K562 (cell line): ENCODE measurements at regions of chr3 and their contacts with region 1.

Region 1: GRCh38 chr3:94062431-94063404 is at the starts of genes DHFR2 and NSUN3:
- DNase-seq: peak; percentile 66 to 94 (median 71)
- ATAC-seq: peak; percentile 95
- H3K4me3 ChIP-seq: peak within 1 kb of the TSS; percentile 70
- H3K27ac ChIP-seq: peak within 1 kb of the TSS; percentile 95
- H3K4me1 ChIP-seq: peaks cover 5% of the 10 kb centered on the region in 2 experiments; a peak in 2 of 5 replicates
- H3K27me3 ChIP-seq: no peaks in the 10 kb centered on the region
- CTCF ChIP-seq: no peak
- EP300 ChIP-seq: peak; percentile 16; the same call in 1 of the 2 replicates
- POLR2A ChIP-seq: peak; percentile 85
- RAD21 ChIP-seq: no peak
- polyA plus RNA-seq, gene DHFR2: 0.68 to 0.83 TPM
- polyA plus RNA-seq, gene NSUN3: 6.9 to 8.1 TPM

Region 2: GRCh38 chr3:93867425-93867824 is 195.3 kb before region 1 on chr3:
- CTCF ChIA-PET with region 1: no interaction called
- POLR2A ChIA-PET with region 1: no interaction called
- in situ Hi-C with region 1: no loop called
- intact Hi-C with region 1: loop called (anchors 10 kb)
- DNase-seq: peak; percentile 3 to 16 (median 6)
- ATAC-seq: peak; percentile 52; the same call in 1 of the 3 replicates
- H3K4me3 ChIP-seq: no peak overlapping the region
- H3K27ac ChIP-seq: no peak overlapping the region
- H3K4me1 ChIP-seq: no peaks in the 10 kb centered on the region
- H3K27me3 ChIP-seq: no peaks in the 10 kb centered on the region
- CTCF ChIP-seq: peak; percentile 22 to 38 (median 34); a peak in 5 of 6 replicates
- EP300 ChIP-seq: no peak
- POLR2A ChIP-seq: no peak
- RAD21 ChIP-seq: 0 out of 4 replicates have a peak, but pooled peaks of 1 of the 2 experiments have one; percentile 23

Region 3: DNA sequence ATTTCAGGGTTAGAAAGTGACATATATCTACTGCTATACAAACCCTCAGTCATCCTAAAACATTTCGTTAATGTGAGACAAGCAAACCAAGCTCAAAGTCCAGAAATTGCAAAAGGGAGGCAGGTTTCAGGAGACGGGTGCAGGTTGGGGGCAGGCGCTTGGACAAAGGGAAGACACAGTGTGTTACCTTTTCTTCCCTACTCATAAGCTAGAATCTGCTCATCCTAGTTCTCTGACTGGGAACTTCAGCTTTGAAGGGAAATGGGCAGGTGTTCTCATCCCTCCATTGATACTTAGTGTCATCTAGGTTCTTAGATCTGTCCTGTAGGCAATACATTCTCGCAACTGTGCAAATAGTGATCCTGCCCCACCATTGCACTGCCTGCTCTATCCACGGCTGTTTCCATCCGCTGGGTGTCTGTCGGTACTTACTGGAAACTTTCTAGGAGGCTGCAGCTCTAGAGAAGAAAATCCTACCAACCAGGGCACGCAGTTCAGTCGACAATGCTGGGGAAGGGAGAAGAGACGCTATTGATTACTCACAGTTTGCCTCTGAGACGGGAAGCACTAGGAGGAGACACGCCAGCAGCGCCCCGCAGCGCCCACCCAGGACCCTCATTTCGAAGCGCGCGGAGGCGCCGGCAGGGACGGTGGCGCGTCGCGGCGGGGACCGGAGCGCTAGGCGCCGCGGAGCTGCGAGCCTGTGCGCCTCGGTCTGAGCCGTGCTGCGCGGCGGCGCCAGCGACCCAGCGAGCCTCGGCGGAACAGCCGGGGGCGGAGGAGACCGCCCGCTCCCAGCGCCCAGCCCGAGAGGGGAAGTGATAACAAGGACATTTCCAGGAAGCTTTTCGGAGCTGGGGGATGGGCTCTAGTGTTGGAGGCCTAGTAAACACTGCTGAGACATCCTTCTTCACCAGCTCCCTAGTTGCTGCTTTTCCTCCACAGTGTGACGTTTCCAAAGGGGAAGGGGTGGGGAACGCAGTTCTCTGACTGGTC is 89.3 kb before region 1 on chr3 and contains the start of gene PROS1:
- CTCF ChIA-PET with region 1: no interaction called
- POLR2A ChIA-PET with region 1: interaction called, 6 read pairs
- in situ Hi-C with region 1: no loop called
- intact Hi-C with region 1: loop called (anchors 2 kb)
- DNase-seq: peak; percentile 60 to 93 (median 70)
- ATAC-seq: peak; percentile 93
- H3K4me3 ChIP-seq: peak within 1 kb of the TSS; percentile 79
- H3K27ac ChIP-seq: peak within 1 kb of the TSS; percentile 92
- H3K4me1 ChIP-seq: peaks cover 11 to 19% of the 10 kb centered on the region in 2 experiments; a peak in 4 of 5 replicates
- H3K27me3 ChIP-seq: no peaks in the 10 kb centered on the region
- CTCF ChIP-seq: no peak
- EP300 ChIP-seq: peak; percentile 66; the same call in 1 of the 2 replicates
- POLR2A ChIP-seq: peak; percentile 61
- RAD21 ChIP-seq: peak; percentile 14 to 25; a peak in 3 of 4 replicates
- polyA plus RNA-seq, gene PROS1: 5.5 to 9.6 TPM

Region 4: DNA sequence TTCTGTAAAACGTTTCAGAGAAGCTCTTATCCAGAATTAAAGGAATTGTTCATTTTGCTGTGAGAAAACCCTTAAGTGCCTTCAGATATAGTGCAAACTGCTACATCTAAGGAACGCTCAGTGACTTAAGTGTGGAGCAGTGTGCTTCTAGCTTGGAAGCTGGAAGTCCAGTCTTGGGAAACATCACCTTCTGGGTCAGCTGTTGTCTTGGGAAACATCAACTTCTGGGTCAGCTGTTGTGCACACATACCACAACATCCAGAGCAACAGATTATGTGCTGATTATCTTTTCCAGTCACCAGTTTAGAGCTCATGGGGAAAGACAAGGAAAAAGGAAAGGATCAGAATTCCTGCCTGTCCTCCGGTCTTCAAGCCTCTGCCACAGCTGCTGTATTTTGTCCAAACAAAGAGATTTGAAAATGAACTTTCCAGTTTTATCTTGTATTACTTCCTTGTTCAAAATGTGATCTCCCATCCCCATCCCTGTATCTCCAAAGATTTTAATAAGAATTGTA is 713.7 kb after region 1 on chr3:
- CTCF ChIA-PET with region 1: no interaction called
- POLR2A ChIA-PET with region 1: no interaction called
- in situ Hi-C with region 1: no loop called
- intact Hi-C with region 1: no loop called
- DNase-seq: no peak
- ATAC-seq: no peak
- H3K4me3 ChIP-seq: no peak overlapping the region
- H3K27ac ChIP-seq: no peak overlapping the region
- H3K4me1 ChIP-seq: no peaks in the 10 kb centered on the region
- H3K27me3 ChIP-seq: no peaks in the 10 kb centered on the region
- CTCF ChIP-seq: no peak
- EP300 ChIP-seq: no peak
- POLR2A ChIP-seq: no peak
- RAD21 ChIP-seq: no peak